ENCODE measurements at regions of chr5 and their contacts with region 1.

Region 1: DNA sequence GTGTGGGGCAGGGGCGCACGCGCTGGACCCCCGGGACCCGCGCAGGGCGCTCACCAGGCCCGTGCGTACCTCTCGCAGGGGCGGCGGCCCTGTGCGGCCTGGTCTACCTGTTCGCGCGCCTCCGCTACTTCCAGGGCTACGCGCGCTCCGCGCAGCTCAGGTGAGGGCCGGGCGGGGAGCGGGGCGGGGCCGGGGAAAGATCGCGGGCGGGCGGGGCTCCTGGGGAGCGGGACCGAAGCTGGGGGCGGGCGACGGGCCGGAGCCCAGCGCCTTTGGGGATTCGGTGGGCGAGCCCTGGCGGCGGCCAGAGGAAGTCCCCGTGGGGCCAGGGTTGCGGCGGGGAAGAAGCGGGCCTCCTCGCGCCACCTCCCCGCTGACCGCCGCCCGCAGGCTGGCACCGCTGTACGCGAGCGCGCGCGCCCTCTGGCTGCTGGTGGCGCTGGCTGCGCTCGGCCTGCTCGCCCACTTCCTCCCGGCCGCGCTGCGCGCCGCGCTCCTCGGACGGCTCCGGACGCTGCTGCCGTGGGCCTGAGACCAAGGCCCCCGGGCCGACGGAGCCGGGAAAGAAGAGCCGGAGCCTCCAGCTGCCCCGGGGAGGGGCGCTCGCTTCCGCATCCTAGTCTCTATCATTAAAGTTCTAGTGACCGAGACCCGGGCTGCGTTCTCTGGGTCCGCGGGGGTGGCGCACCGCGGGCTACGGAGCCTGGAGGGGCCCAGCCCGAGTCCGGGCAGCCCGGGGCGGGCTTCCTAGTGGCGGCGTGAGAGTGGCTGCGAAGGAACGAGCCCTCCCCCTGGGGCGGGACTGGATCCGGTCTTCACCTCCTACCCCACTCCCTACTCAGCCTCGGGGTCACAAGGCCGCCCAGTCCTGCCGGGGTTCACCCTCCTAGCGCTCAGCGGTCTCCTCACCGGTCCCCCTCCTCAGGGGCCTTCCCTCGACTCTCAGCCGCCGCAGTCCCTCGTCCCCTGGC is 2.4 kb downstream of the LTC4S start:
- DNase-seq: peak in 6 of 10 donors; percentile 59 to 84 (median 73)
- H3K4me3 ChIP-seq: peak overlapping the region; percentile 50 to 81 (median 68)
- H3K27ac ChIP-seq: peak overlapping the region; percentile 1 to 93 (median 76)
- H3K27me3 ChIP-seq: no peaks in the 10 kb centered on the region
- CTCF ChIP-seq: peak; percentile 51 to 99 (median 84)

Region 2: DNA sequence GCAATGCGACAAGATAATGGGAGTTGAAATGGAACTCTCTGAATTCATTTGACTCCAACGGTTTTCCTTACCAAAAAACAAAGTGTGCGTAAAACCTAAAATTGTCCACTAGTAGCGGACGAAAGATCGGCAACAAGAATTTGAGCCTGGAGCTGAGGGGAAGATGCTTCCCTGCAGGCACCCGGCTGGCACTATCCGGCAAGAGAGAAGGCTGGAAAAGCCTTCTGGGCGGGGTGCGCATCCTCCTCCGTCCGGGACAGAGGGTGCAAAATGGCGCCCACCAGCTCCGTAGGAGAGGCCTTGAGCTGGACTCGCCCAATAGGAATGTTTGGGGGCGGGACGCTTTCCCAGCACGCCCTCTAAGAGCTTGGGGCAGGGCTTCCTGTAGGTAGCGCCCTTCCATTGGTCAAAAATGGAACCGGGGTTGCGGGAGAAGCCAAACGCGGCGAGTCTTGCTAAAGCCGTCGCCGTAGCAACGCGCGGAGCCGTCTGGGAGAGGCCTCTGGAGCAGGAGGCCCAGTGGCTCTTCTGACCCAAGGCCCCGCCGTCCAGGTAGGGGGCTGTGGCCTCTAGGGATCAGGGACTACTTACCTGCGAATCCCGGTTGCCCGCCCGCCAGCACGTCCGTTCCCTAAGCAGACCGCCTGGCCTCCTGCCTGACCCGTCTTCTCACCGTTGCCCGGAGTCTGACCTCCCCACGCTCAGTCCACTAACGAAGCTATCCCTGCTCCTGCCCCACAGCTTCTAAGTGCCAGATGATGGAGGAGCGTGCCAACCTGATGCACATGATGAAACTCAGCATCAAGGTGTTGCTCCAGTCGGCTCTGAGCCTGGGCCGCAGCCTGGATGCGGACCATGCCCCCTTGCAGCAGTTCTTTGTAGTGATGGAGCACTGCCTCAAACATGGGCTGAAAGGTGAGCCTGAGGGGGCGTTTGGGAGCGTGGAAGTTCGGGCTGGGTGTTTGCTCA is 236.6 kb before region 1 on chr5:
- intact Hi-C with region 1: loop called in 1 of 2 experiments (anchors 10 kb)
- DNase-seq: peak; percentile 90 to 99 (median 98)
- H3K4me3 ChIP-seq: peak overlapping the region; percentile 57 to 95 (median 77)
- H3K27ac ChIP-seq: peak overlapping the region; percentile 34 to 95 (median 85)
- H3K27me3 ChIP-seq: no peaks in the 10 kb centered on the region
- CTCF ChIP-seq: peak in 53 of 56 donors; percentile 16 to 72 (median 45)

Region 3: GRCh38 chr5:179607160-179607931 is 188.8 kb before region 1 on chr5:
- intact Hi-C with region 1: no loop called
- DNase-seq: peak; percentile 57 to 94 (median 83)
- H3K4me3 ChIP-seq: no peak overlapping the region
- H3K27ac ChIP-seq: peak overlapping the region in 58 of 59 donors; percentile 34 to 88 (median 78)
- H3K27me3 ChIP-seq: no peaks in the 10 kb centered on the region
- CTCF ChIP-seq: no peak

Region 4: GRCh38 chr5:179623003-179623880 is 172.9 kb before region 1 on chr5 and contains the start of gene HNRNPH1:
- intact Hi-C with region 1: no loop called
- DNase-seq: peak; percentile 96 to 99 (median 97)
- H3K4me3 ChIP-seq: peak within 1 kb of the TSS; percentile 68 to 100 (median 99)
- H3K27ac ChIP-seq: peak within 1 kb of the TSS; percentile 90 to 100 (median 99)
- H3K27me3 ChIP-seq: no peaks in the 10 kb centered on the region
- CTCF ChIP-seq: peak in 23 of 56 donors; percentile 0 to 48 (median 19)
- total RNA-seq, gene HNRNPH1: 242 to 469 (median 329) TPM

Region 5: DNA sequence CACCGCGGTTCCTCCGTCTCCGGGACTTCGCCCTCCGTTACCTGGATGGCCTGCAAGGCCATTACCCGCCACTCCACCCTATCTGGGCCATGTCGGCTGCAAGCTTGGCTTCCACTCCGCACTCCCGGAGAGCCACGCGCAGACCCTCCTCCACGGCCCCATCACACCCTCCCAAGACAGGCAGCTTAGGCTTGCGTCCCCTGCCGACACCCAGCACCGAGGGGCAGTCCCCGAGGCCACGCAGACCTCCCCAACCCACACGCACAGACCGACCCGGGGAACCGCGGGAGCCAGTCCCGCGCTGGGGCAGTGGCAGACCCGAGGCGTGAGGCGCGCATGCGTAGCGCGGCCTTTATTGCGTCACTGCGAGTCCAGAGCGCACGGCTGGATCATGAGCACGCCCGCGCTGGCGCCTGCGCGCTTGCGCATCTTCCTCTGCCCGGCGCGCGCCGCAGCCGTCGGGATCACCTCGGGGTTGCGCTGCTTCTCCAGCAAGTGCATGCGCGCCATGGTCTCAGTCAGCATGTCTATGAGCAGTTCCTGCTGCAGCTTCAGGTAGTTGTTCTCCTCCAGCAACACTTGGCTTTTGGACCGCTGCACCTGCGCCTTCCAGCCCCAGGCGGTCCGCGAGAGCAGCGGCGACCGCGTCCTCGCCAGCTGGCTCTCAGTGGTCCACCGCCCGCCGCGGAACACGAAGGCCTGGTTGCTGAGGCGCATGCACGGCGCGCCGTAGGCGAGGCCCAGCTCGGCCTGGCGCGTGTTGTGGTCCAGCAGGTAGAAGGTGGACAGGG is 117.7 kb before region 1 on chr5:
- intact Hi-C with region 1: loop called in 1 of 2 experiments (anchors 1 kb)
- DNase-seq: peak; percentile 92 to 96 (median 94)
- H3K4me3 ChIP-seq: peak overlapping the region; percentile 70 to 100 (median 92)
- H3K27ac ChIP-seq: peak overlapping the region; percentile 60 to 98 (median 91)
- H3K27me3 ChIP-seq: no peaks in the 10 kb centered on the region
- CTCF ChIP-seq: peak in 35 of 56 donors; percentile 9 to 57 (median 32)

Region 6: GRCh38 chr5:179732417-179732917 is 63.7 kb before region 1 on chr5 and contains the start of gene MAML1:
- intact Hi-C with region 1: loop called (anchors 2 to 10 kb)
- DNase-seq: peak; percentile 100
- H3K4me3 ChIP-seq: peak within 1 kb of the TSS; percentile 54 to 97 (median 81)
- H3K27ac ChIP-seq: peak within 1 kb of the TSS; percentile 60 to 99 (median 93)
- H3K27me3 ChIP-seq: no peaks in the 10 kb centered on the region
- CTCF ChIP-seq: peak in 27 of 56 donors; percentile 0 to 53 (median 29)
- total RNA-seq, gene MAML1: 17.4 to 42.6 (median 27.4) TPM

Region 7: DNA sequence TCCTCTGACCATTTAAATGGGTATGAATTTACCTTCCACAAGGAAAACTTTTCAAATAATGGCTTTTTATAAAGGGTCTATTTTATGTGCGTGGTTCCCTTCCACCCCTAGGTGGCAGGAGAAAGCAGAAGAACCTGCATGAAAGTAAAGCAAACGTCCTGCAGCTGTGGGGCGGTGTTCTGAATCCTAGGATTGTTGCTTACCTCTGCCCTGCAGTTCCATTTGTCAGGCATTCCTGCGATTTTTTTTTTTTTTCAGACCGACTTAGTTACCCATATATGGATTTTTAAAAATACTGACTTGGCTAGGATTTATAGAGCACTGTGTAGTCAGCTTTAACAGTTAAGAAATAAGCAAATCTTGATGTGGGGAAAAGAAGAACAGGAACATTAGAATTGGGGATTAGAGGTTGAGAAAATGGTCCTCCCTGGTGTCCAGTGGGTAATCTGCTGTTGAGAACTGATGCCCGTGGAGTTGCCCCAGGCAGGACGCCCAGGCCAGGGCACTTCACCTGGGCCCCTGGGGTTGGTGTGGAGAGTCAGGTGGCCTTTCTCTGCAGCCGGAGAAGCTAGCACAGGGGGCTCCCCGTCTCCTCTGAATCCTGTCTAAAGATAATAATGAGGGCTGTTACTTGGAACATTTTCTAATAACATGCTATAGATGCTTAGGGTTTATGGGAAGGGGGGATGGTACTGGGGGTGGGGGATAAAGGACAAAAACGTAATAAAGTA is 32.8 kb before region 1 on chr5:
- intact Hi-C with region 1: loop called (anchors 1 to 5 kb)
- DNase-seq: peak in 8 of 10 donors; percentile 53 to 78 (median 66)
- H3K4me3 ChIP-seq: peak overlapping the region in 2 of 59 donors; percentile 14 to 34
- H3K27ac ChIP-seq: peak overlapping the region in 31 of 59 donors; percentile 2 to 69 (median 44)
- H3K27me3 ChIP-seq: no peaks in the 10 kb centered on the region
- CTCF ChIP-seq: peak; percentile 76 to 95 (median 87)

Region 8: GRCh38 chr5:180090098-180090768 is 294.1 kb after region 1 on chr5:
- intact Hi-C with region 1: loop called in 1 of 2 experiments (anchors 5 kb)
- DNase-seq: peak in 7 of 10 donors; percentile 20 to 82 (median 63)
- H3K4me3 ChIP-seq: peak overlapping the region; percentile 43 to 78 (median 63)
- H3K27ac ChIP-seq: peak overlapping the region in 52 of 59 donors; percentile 16 to 88 (median 70)
- H3K27me3 ChIP-seq: no peaks in the 10 kb centered on the region
- CTCF ChIP-seq: peak; percentile 66 to 97 (median 90)